ENCODE measurements at regions of chr17 and their contacts with region 1.

Region 1: DNA sequence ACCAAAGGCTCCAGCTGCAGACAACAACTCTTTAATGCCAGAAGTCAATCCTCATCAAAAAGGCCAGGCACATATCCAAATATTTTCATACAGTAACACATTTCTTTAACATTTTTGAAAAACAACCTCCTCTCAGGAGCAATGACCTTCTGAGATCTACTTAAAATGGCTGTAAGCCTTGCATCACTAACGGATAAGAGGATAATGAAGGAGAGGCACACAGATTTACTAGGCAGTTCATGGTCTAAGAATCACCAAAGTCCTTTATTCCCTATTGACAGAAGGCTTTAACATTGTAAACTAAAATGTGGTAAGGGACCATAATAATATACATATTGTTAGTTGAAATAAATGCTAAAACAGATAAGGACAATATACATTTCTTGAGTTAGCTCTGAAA is 114.7 kb downstream of the USP32 start:
- DNase-seq: no peak
- ATAC-seq: no peak

Region 2: GRCh38 chr17:60327122-60327900 is 50.1 kb after region 1 on chr17:
- intact Hi-C with region 1: loop called (anchors 10 kb)
- DNase-seq: no peak
- ATAC-seq: no peak

Measured in left ventricle myocardium superior (tissue), 1 donor.